ENCODE measurements at regions of chr16 and their contacts with region 1.

Region 1: GRCh38 chr16:4802659-4803287 is 340 bp upstream of the ROGDI start:
- DNase-seq: peak; percentile 96

Region 2: GRCh38 chr16:4693296-4693955 is 109.3 kb before region 1 on chr16 and contains the start of gene NUDT16L1:
- intact Hi-C with region 1: loop called (anchors 10 kb)
- DNase-seq: peak; percentile 98
- total RNA-seq, gene NUDT16L1: 43.7 TPM

Region 3: DNA sequence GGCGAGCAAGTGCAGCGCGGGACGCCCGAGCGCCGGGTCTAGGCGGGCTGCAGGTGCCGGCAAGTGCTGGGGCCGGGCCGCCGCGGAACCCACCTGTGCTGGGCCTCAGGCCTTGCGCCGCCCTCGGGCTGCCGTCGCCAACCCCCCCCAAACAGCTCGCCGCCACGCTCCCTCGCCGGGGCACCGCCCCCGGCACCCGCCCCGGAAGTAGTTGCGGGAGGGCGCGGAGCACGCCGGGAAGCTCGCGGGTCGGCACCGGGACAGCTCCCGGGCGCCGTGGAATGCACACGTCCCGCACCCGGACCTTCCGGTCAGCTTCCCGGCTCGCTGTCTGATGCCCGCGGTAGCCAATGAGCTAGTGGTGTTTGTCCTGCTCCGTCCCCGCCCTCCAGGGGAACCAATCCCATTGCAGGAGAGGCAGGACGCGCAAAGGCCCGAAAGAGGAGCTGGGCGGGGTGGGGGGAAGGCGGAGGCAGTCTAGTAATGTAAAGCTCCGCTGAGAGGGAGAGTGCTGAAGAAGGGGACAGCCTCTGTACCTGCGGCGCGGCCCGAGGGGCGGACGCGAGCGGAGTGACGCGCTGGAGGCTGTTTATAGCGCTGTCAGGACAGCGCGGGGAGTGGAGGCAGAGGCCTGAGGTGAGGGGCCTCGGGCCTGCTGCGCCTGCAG is 68.6 kb before region 1 on chr16 and contains the starts of genes ANKS3 and DNAAF8:
- intact Hi-C with region 1: loop called (anchors 10 kb)
- DNase-seq: peak; percentile 97
- total RNA-seq, gene ANKS3: 9.9 TPM
- total RNA-seq, gene DNAAF8: 0.65 TPM

Region 4: GRCh38 chr16:4766874-4767628 is 35.7 kb before region 1 on chr16 and contains the start of gene ZNF500:
- intact Hi-C with region 1: loop called (anchors 1 kb)
- DNase-seq: peak; percentile 99
- total RNA-seq, gene ZNF500: 7.2 TPM

Measured in cardiac septum (tissue), 1 donor.